HepG2 (cell line): ENCODE measurements at regions of chr1 and their contacts with region 1.

Region 1: GRCh38 chr1:205504311-205504984 is at the start of gene CDK18:
- DNase-seq: peak; percentile 78
- ATAC-seq: peak; percentile 79
- H3K4me3 ChIP-seq: peak within 1 kb of the TSS; percentile 69 to 83 (median 71)
- H3K27ac ChIP-seq: peak within 1 kb of the TSS; percentile 76
- H3K4me1 ChIP-seq: peaks cover 84% of the 10 kb centered on the region
- H3K27me3 ChIP-seq: no peaks in the 10 kb centered on the region; a peak in 1 of 5 replicates
- CTCF ChIP-seq: no peak
- EP300 ChIP-seq: 0 out of 4 replicates have a peak, but pooled peaks of 1 of the 2 experiments have one; percentile 4
- POLR2A ChIP-seq: peak; percentile 49 to 65; a peak in 3 of 4 replicates
- RAD21 ChIP-seq: no peak
- total RNA-seq, gene CDK18: 3.2 and 6.4 TPM in 2 replicates

Region 2: GRCh38 chr1:205284343-205285144 is 219.9 kb before region 1 on chr1:
- CTCF ChIA-PET with region 1: no interaction called
- POLR2A ChIA-PET with region 1: no interaction called
- in situ Hi-C with region 1: no loop called
- intact Hi-C with region 1: no loop called
- DNase-seq: peak; percentile 97
- ATAC-seq: peak; percentile 96
- H3K4me3 ChIP-seq: peak overlapping the region in 1 of 3 experiments; percentile 25; a peak in 2 of 6 replicates
- H3K27ac ChIP-seq: peak overlapping the region; percentile 15
- H3K4me1 ChIP-seq: peaks cover 53% of the 10 kb centered on the region
- H3K27me3 ChIP-seq: no peaks in the 10 kb centered on the region
- CTCF ChIP-seq: peak; percentile 61
- EP300 ChIP-seq: peak in 1 of 2 experiments; percentile 78; a peak in 1 of 4 replicates
- POLR2A ChIP-seq: no peak
- RAD21 ChIP-seq: no peak; the same call in 1 of the 2 replicates

Region 3: GRCh38 chr1:205477759-205478247 is 26.6 kb before region 1 on chr1:
- CTCF ChIA-PET with region 1: no interaction called
- POLR2A ChIA-PET with region 1: no interaction called
- in situ Hi-C with region 1: no loop called
- intact Hi-C with region 1: no loop called
- DNase-seq: no peak
- ATAC-seq: no peak
- H3K4me3 ChIP-seq: no peak overlapping the region
- H3K27ac ChIP-seq: no peak overlapping the region
- H3K4me1 ChIP-seq: 0 out of 2 replicates have a peak, but pooled peaks cover 5% of the 10 kb centered on the region
- H3K27me3 ChIP-seq: peaks cover 5 to 19% of the 10 kb centered on the region in 2 experiments; a peak in 4 of 5 replicates
- CTCF ChIP-seq: no peak
- EP300 ChIP-seq: no peak
- POLR2A ChIP-seq: no peak
- RAD21 ChIP-seq: no peak

Region 4: GRCh38 chr1:205493241-205494085 is 11.0 kb before region 1 on chr1:
- CTCF ChIA-PET with region 1: no interaction called
- POLR2A ChIA-PET with region 1: interaction called, 12 read pairs
- in situ Hi-C with region 1: no loop called
- intact Hi-C with region 1: loop called (anchors 1 kb)
- DNase-seq: peak; percentile 41
- ATAC-seq: peak; percentile 40
- H3K4me3 ChIP-seq: peak overlapping the region in 1 of 3 experiments; percentile 49; a peak in 1 of 6 replicates
- H3K27ac ChIP-seq: no peak overlapping the region
- H3K4me1 ChIP-seq: peaks cover 85% of the 10 kb centered on the region
- H3K27me3 ChIP-seq: peaks cover 0 to 14% of the 10 kb centered on the region in 2 experiments; a peak in 2 of 5 replicates
- CTCF ChIP-seq: no peak
- EP300 ChIP-seq: no peak
- POLR2A ChIP-seq: no peak
- RAD21 ChIP-seq: no peak